Activated CD4-positive, alpha-beta T cell treated with anti-CD3 and anti-CD28 coated beads for 36 hours (primary cell): ENCODE measurements at regions of chr3 and their contacts with region 1.

Region 1: GRCh38 chr3:127483902-127484591 is 106.5 kb downstream of the TPRA1 start:
- DNase-seq: peak; percentile 88
- ATAC-seq: peak; percentile 86
- H3K4me3 Mint-ChIP-seq: peak overlapping the region; percentile 25
- H3K27ac Mint-ChIP-seq: peak overlapping the region; percentile 72
- H3K4me1 Mint-ChIP-seq: peaks cover 26% of the 10 kb centered on the region
- H3K27me3 Mint-ChIP-seq: peaks cover 39% of the 10 kb centered on the region

Region 2: DNA sequence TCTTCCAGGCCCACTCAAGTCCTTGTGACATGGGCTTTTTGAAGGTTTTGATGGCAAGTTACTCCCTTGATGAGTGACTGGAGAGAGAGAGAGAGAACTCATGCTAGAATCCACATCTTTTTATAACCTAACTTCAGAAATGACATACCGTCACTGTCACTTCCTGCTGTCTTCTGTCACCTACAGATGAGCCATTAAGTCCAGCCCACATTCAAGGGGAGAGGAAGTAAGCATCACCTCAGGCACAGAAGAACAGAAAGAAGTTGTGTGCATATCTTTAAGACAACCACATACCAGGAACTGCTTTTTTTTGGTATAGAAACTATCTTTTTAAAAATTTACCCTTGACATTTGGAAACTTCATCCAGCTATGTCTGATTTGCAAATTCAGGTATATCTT is 812.5 kb before region 1 on chr3:
- CTCF ChIA-PET with region 1: no interaction called
- POLR2A ChIA-PET with region 1: no interaction called
- intact Hi-C with region 1: loop called in 1 of 2 experiments (anchors 1 kb)
- DNase-seq: no peak
- ATAC-seq: peak; percentile 98
- H3K4me3 Mint-ChIP-seq: no peak overlapping the region
- H3K27ac Mint-ChIP-seq: no peak overlapping the region
- H3K4me1 Mint-ChIP-seq: peaks cover 5% of the 10 kb centered on the region
- H3K27me3 Mint-ChIP-seq: peaks cover 3% of the 10 kb centered on the region

Region 3: DNA sequence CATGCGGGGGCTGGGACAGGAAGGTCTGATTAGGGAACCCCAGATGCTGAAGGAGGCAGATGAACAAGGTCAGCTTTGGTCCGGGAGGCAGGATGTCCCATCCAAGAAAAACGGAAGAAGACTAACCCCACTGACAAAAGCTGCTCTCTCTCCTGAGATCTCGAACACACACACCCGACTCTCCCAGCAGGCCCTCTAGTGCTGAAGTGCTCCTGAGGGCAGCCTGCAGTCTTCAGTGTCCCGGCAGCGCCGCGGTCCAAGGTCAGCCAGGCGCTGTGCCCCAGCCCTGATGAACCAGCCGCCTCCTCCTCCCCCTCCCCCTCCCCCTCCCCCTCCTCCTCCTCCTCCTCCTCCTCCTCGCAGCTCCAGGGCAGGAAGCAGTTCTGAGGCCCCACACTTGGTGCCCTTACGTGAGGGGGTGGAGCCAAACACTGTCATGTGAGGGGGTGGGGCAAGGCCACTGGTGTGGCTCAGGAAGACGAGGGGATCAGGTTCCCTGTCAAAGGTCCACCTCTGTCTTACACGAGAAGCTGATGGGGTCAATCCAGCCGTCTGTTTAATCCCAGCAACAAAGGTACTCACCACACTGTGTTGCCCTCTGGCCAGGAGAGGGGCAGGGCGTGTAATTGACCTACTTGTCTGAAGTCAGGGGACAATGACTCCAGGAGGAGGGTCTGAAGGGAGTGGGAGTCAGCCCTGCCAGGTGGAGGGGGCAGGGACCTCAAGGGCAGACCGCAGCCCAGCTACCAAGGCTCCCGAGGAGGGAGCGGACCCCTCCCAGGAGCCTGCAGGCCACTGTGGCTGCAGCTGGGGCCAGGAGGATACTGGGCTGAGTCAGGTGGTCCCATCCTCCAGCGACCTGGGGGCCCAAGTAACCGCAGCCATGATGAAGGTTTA is 256.9 kb before region 1 on chr3:
- CTCF ChIA-PET with region 1: no interaction called
- POLR2A ChIA-PET with region 1: no interaction called
- intact Hi-C with region 1: loop called in 1 of 2 experiments (anchors 10 kb)
- DNase-seq: peak; percentile 64
- ATAC-seq: peak; percentile 86
- H3K4me3 Mint-ChIP-seq: peak overlapping the region; percentile 35
- H3K27ac Mint-ChIP-seq: peak overlapping the region; percentile 2
- H3K4me1 Mint-ChIP-seq: peaks cover 25% of the 10 kb centered on the region
- H3K27me3 Mint-ChIP-seq: peaks cover 12% of the 10 kb centered on the region

Region 4: DNA sequence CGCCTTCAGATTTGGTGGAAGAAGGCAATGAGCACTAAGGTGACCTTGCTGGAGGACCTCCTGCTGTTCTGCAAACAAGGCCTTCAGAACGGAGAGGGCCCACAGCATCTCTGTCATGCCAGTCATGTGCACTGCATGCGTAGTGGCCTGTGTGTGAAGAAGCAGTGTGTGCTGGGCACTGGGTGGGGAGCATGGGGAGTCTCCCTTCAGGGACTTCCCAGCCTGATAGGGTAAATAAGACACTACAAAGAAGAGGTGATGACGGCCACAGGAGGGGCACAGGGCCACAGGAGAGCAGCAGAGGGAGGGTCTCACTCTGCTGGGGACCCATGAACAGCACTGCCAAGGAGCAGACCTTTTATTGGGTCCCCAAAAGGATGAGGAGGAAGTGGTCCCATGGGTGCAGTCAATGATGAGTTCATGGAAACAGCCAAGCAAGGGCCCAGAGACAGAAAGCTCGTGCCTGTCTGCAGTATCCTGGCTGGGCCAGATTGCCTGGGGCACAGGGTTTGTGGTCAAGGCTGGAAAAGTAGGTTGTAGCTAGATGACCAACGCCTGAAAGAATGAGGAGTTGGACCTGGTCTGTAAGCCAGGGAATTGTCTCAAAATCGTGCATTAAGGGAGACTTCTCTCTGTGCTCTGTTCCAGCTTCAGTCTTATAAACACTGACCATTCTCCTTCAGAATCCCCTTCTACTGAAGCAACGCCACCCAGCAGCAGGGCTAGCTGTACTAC is 500.4 kb after region 1 on chr3:
- CTCF ChIA-PET with region 1: no interaction called
- POLR2A ChIA-PET with region 1: no interaction called
- intact Hi-C with region 1: no loop called
- DNase-seq: no peak
- ATAC-seq: no peak
- H3K4me3 Mint-ChIP-seq: no peak overlapping the region
- H3K27ac Mint-ChIP-seq: no peak overlapping the region
- H3K4me1 Mint-ChIP-seq: no peaks in the 10 kb centered on the region
- H3K27me3 Mint-ChIP-seq: no peaks in the 10 kb centered on the region

Region 5: DNA sequence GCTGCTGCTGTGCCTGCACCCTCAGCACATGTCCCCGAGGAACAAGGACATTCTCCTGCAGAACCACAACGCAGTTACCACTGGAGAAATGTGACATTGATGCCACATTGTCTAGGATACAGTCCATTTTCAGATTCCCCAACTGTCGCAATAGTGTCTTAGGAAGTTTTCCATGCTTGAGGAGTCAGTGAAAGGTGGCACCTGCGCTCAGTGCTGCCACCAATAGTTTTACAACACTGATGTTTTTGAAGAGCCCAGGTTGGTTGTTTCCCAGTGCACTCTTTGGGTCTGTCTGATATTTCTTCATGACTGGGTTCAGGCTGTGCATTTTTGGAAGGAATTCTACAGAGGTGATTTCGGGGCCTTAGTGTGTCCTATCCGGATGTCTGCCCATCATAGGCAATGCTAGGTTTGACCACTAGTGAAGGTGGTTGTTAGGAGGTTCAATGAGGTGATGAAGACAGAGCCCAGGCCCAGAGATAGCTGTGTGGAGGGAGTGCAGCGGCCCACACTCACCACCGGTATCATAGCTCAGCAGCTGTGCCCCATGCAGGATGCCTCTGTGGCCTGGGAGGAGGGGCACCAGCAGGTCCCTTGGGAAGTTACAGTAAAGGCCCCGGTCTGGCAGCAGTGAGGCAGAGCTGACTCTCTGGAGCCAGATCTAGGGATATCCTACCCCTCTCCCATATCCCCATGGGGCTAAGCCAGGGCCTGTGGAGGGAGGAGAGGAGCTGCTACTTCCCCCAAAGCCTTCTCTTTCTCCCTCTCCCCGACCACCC is 886.0 kb after region 1 on chr3:
- CTCF ChIA-PET with region 1: no interaction called
- POLR2A ChIA-PET with region 1: no interaction called
- intact Hi-C with region 1: no loop called
- DNase-seq: no peak
- ATAC-seq: no peak
- H3K4me3 Mint-ChIP-seq: no peak overlapping the region
- H3K27ac Mint-ChIP-seq: no peak overlapping the region
- H3K4me1 Mint-ChIP-seq: peaks cover 5% of the 10 kb centered on the region
- H3K27me3 Mint-ChIP-seq: no peaks in the 10 kb centered on the region